ENCODE measurements at regions of chr4 and their contacts with region 1.

Region 1: DNA sequence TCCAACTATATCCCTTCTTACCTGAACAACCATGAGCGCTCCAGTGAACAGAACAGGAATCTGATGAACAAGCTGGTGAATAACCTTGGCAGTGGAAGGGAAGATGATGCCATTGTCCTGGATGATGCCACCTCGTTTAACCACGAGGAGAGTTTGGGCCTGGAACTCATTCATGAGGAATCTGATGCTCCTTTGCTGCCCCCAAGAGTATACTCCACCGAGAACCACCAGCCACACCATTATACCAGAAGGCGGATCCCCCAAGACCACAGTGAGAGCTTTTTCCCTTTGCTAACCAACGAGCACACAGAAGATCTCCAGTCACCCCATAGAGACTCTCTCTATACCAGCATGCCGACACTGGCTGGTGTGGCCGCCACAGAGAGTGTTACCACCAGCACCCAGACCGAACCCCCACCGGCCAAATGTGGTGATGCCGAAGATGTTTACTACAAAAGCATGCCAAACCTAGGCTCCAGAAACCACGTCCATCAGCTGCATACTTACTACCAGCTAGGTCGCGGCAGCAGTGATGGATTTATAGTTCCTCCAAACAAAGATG is 870.2 kb downstream of the ADGRL3 start:
- DNase-seq: no peak
- H3K4me3 Mint-ChIP-seq: no peak overlapping the region
- H3K27ac Mint-ChIP-seq: no peak overlapping the region
- H3K4me1 Mint-ChIP-seq: no peaks in the 10 kb centered on the region
- H3K27me3 Mint-ChIP-seq: no peaks in the 10 kb centered on the region

Region 2: DNA sequence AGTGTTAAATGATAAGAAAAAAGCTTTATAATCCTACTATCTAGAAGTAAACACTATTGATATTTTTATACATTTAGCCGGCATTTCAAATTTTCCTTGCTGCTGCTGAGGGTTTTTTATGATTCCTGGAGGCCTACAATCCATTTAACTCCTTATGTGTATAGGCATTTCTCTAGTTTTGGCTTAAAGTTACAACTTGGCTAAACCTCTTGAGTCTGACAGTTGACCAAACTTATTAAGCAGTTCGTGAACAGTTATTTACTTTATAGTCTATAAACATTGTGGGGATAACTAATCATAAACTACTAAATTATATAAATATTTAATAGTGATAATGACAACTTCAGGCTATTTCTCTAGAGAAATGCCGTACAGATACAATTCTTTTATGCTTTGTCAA is 728.3 kb before region 1 on chr4:
- CTCF ChIA-PET with region 1: no interaction called
- intact Hi-C with region 1: no loop called
- DNase-seq: no peak
- H3K4me3 Mint-ChIP-seq: no peak overlapping the region
- H3K27ac Mint-ChIP-seq: no peak overlapping the region
- H3K4me1 Mint-ChIP-seq: no peaks in the 10 kb centered on the region
- H3K27me3 Mint-ChIP-seq: no peaks in the 10 kb centered on the region

Region 3: GRCh38 chr4:63644396-63644795 is 1574.0 kb after region 1 on chr4:
- CTCF ChIA-PET with region 1: no interaction called
- intact Hi-C with region 1: loop called (anchors 5 kb)
- DNase-seq: no peak
- H3K4me3 Mint-ChIP-seq: no peak overlapping the region
- H3K27ac Mint-ChIP-seq: no peak overlapping the region
- H3K4me1 Mint-ChIP-seq: no peaks in the 10 kb centered on the region
- H3K27me3 Mint-ChIP-seq: no peaks in the 10 kb centered on the region

Measured in activated naive CD4-positive, alpha-beta T cell treated with anti-CD3 and anti-CD28 coated beads for 36 hours (primary cell).